Heart right ventricle (tissue), 16 donors: ENCODE measurements at regions of chr6 and their contacts with region 1.

Region 1: GRCh38 chr6:96897383-96898240 is at the start of gene NDUFAF4:
- DNase-seq: peak; percentile 96 to 97
- ATAC-seq: peak; percentile 97 to 100 (median 99)
- H3K4me3 ChIP-seq: peak within 1 kb of the TSS; percentile 75 to 97 (median 88)
- H3K27ac ChIP-seq: peak within 1 kb of the TSS; percentile 89 to 98 (median 94)
- H3K4me1 ChIP-seq: peaks cover 0 to 63% (median 40%) of the 10 kb centered on the region in 9 donors
- H3K27me3 ChIP-seq: no peaks in the 10 kb centered on the region
- CTCF ChIP-seq: peak; percentile 93 to 99 (median 96)
- total RNA-seq, gene NDUFAF4: 70.7 to 122 (median 101) TPM

Region 2: DNA sequence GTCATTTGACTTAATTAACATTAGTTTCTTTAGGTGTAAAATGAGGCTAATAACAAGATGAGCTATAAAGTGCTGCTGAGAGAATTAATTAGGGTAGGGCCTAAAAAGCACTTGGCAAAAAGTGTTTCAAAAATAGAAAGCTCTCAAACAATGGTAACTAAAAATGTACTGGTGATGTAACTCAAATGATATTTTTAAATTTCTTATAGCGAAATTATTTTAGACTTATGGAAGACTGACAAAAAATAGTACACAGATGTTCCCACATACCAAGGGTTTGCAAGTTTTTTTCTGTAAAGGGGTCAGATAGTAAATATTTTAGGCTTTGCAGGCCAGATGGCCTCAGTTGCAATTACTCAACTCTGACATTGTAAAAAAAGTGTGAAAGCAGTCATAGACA is 566.7 kb before region 1 on chr6:
- intact Hi-C with region 1: no loop called
- DNase-seq: no peak
- ATAC-seq: no peak
- H3K4me3 ChIP-seq: no peak overlapping the region
- H3K27ac ChIP-seq: no peak overlapping the region
- H3K4me1 ChIP-seq: no peaks in the 10 kb centered on the region
- H3K27me3 ChIP-seq: no peaks in the 10 kb centered on the region
- CTCF ChIP-seq: no peak

Region 3: DNA sequence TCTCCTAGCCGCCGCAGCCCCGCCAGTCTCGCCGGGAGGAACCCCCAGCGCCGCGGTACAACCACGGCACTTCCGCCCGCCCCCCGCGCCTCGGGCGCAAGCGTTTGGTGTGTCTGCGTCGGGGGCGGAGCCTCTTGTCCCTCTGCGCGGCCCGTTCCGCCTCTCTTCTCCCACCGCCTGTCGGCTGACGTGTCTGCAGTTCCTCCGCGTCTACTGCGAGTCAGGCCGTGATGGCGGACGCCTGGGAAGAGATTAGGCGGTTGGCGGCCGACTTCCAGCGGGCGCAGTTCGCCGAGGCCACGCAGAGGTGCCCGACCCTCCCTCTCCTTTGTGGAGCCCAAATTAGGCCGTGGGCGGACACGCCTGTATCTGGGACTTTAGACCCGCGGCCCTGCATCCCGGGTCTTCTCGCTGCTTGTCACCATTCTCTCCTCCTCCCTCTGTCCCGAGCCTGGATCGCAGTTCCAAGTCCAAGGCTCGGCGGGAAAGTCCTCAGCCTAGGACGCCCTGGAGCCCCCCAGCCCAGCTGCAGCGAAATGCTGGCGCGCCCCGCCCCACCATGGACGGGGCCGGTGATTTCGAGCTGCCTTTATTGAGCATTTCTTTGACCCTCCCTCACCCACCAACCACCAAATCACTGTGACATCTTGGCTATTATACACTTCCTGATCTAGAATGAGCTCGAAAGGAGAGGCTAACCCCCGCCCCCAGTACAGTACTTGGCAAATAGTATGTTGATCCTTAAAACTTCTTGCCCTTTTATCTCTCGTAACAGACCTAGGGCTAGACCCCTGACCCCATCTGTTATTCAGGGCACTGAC is 375.8 kb before region 1 on chr6 and contains the start of gene UFL1:
- intact Hi-C with region 1: loop called in 5 of 10 experiments (anchors 5 to 10 kb)
- DNase-seq: peak; percentile 94
- ATAC-seq: peak; percentile 100
- H3K4me3 ChIP-seq: peak within 1 kb of the TSS; percentile 68 to 92 (median 83)
- H3K27ac ChIP-seq: peak within 1 kb of the TSS; percentile 82 to 98 (median 94)
- H3K4me1 ChIP-seq: peaks cover 0 to 34% (median 24%) of the 10 kb centered on the region in 9 donors
- H3K27me3 ChIP-seq: no peaks in the 10 kb centered on the region
- CTCF ChIP-seq: peak in 3 of 9 donors; percentile 24 to 32 (median 31)
- total RNA-seq, gene UFL1: 21.0 to 32.7 (median 26.0) TPM

Region 4: DNA sequence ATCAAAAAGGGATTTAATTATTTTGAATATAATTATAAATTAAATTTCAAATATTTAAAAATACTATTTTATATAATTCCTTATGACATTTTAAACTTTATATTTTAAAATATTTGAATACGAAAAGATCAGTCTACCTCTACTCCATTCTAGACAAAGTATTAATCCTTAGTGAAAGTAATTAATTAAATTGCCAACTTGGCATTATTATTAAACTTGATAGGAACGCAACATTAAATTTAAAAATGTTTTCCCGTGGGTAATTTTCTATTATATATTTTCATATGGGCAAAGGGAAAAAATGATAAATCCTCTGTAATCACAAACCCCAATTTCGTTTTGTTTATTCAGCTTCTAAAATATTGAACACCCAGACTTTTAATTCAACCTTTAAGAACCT is 343.1 kb before region 1 on chr6:
- intact Hi-C with region 1: loop called in 1 of 10 experiments (anchors 10 kb)
- DNase-seq: no peak
- ATAC-seq: no peak
- H3K4me3 ChIP-seq: no peak overlapping the region
- H3K27ac ChIP-seq: no peak overlapping the region
- H3K4me1 ChIP-seq: no peaks in the 10 kb centered on the region
- H3K27me3 ChIP-seq: no peaks in the 10 kb centered on the region
- CTCF ChIP-seq: no peak

Region 5: GRCh38 chr6:96645106-96645505 is 252.5 kb before region 1 on chr6:
- intact Hi-C with region 1: no loop called
- DNase-seq: no peak
- ATAC-seq: no peak
- H3K4me3 ChIP-seq: no peak overlapping the region
- H3K27ac ChIP-seq: no peak overlapping the region
- H3K4me1 ChIP-seq: peaks cover 0 to 4% (median 0%) of the 10 kb centered on the region in 9 donors
- H3K27me3 ChIP-seq: no peaks in the 10 kb centered on the region
- CTCF ChIP-seq: no peak

Region 6: DNA sequence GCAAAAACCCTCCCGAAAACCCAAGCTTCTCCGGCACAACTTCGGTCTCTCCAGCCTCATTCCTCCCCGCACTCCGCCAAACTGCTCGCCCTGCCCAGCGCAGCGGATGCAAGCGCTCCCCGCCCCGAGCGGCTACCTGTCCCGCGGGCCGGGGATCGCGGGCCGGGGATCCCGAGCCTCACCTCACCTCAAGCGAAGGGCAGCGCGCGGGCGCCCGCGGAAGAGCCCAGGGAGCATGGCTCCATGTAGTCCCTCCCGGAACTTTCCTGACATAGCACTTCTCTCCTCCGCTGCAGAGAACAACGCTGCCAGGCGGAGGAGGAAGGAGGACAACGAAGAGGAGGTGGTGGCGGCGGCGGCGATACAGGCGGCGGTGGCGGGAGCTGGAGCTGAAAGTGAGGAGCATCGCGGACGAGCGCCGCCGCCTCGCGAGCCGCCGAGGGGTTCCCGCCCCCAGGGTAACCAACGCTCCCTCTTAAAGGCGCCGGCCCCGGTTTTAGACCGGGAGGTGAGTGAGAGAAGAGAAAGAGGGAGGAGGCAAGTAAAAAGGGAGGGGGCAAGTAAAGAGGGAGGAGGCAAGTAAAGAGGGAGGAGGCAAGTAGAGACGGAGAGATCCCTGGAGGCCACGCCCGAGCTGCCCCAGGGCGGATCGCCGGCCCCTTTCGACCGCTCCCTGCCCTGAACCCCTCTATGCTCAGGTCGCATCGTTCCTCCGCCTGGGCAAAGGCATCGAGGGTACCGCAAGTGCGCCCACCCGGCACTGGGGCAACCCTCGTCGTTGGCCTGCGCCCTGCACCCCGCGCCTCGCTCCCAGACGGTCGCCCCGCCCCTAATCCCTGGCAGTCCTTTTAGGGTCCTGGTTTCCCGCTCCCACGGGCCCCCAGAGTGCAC is 60.3 kb before region 1 on chr6 and contains the start of gene GPR63:
- intact Hi-C with region 1: loop called in 2 of 10 experiments (anchors 5 kb)
- DNase-seq: peak; percentile 48 to 54
- ATAC-seq: peak; percentile 82 to 94 (median 89)
- H3K4me3 ChIP-seq: peak within 1 kb of the TSS; percentile 42 to 92 (median 76)
- H3K27ac ChIP-seq: peak within 1 kb of the TSS in 5 of 10 donors; percentile 24 to 49 (median 33)
- H3K4me1 ChIP-seq: peaks cover 0 to 23% (median 15%) of the 10 kb centered on the region in 9 donors
- H3K27me3 ChIP-seq: peaks cover 0 to 46% (median 4%) of the 10 kb centered on the region in 7 donors
- CTCF ChIP-seq: peak in 1 of 9 donors; percentile 6
- total RNA-seq, gene GPR63: 0.15 to 2.5 (median 1.2) TPM

Region 7: DNA sequence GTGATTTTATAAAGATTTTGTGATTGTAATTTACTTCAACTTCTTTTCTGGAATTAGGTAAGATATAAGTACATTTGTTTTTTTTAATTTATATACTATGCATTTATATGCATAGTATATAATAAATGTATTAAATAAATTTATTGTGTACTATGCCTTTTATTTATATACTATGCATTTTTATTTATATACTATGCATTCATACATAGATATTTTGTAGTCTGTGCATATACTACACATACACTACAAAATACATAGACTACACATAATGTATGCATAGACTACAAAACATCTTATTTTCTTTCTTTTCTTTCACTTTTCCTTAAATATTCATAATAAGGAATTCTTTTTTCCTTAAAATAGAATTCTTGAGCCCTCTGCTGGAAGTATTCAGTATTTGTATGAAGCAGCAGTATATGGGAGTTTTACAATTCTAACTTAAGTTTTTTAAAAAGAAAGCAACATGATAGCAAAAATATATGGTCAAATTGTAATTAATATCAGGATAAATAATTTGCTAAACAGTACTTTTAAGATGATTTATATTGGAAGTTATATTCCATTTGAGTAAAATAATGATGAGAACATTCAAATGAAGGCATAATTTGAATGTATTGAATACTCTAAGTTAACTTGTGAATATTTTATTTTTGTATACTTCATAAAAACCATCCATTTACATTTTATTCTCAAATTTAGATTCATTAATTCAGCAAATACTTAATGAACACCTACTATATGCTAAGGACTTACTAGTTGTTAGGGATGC is 156.2 kb after region 1 on chr6:
- intact Hi-C with region 1: loop called in 9 of 10 experiments (anchors 1 to 5 kb)
- DNase-seq: no peak
- ATAC-seq: no peak
- H3K4me3 ChIP-seq: no peak overlapping the region
- H3K27ac ChIP-seq: no peak overlapping the region
- H3K4me1 ChIP-seq: peaks cover 0 to 4% (median 0%) of the 10 kb centered on the region in 9 donors
- H3K27me3 ChIP-seq: no peaks in the 10 kb centered on the region
- CTCF ChIP-seq: peak; percentile 14 to 70 (median 63)

Region 8: GRCh38 chr6:97068211-97068610 is 170.6 kb after region 1 on chr6:
- intact Hi-C with region 1: loop called in 1 of 10 experiments (anchors 5 kb)
- DNase-seq: no peak
- ATAC-seq: no peak
- H3K4me3 ChIP-seq: no peak overlapping the region
- H3K27ac ChIP-seq: no peak overlapping the region
- H3K4me1 ChIP-seq: no peaks in the 10 kb centered on the region
- H3K27me3 ChIP-seq: peaks cover 0 to 4% (median 0%) of the 10 kb centered on the region in 7 donors
- CTCF ChIP-seq: peak in 7 of 9 donors; percentile 36 to 66 (median 52)